Naive thymus-derived CD4-positive, alpha-beta T cell (primary cell): ENCODE measurements at regions of chr3 and their contacts with region 1.

Region 1: DNA sequence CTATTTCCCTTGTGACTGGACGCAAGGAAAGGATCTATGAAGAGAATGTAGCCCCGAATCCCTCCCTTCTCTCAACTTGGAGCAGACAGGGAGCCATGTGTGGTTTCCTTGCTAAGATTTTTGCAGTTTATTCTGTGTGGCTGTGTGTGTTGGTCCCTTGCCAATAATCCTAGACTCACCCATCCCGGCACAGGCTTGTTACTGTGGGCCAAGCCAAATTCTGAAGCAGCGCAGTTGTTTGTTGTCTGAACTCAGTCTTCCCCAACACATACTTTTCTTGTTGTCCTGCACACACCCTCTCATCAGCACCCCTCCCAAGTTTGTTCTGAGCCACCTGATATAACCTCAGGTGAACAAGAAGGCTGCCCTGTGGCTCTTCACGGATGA is 193.3 kb upstream of the CTDSPL start:
- DNase-seq: no peak
- ATAC-seq: no peak
- H3K4me3 ChIP-seq: no peak overlapping the region
- H3K4me3 Mint-ChIP-seq: no peak overlapping the region
- H3K27ac ChIP-seq: no peak overlapping the region
- H3K27ac Mint-ChIP-seq: no peak overlapping the region
- H3K4me1 ChIP-seq: no peaks in the 10 kb centered on the region
- H3K4me1 Mint-ChIP-seq: no peaks in the 10 kb centered on the region
- H3K27me3 ChIP-seq: no peaks in the 10 kb centered on the region
- H3K27me3 Mint-ChIP-seq: peaks cover 2 to 24% (median 11%) of the 10 kb centered on the region in 5 donors

Region 2: DNA sequence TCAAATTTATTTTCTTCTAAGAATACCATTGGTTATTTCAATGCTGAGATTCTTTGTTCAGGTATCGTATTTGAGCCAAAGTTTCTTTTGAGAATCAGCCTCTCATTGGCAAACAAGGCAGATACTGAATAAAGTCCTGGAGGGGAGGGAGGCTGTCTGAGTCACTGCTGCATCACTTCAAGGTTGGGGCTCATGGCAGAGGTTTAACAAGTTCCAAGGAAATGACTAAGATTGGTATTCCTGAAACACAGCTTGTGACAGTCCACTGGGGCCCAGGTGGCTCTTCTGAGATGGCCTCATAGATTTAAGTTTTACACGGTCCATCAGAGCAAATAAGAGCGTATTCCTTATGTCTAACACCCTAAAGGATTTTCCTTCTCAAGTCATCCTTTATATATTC is 1501.9 kb before region 1 on chr3:
- CTCF ChIA-PET with region 1: no interaction called
- POLR2A ChIA-PET with region 1: no interaction called
- intact Hi-C with region 1: loop called in 1 of 2 experiments (anchors 10 kb)
- DNase-seq: no peak
- ATAC-seq: no peak
- H3K4me3 ChIP-seq: no peak overlapping the region
- H3K4me3 Mint-ChIP-seq: no peak overlapping the region
- H3K27ac ChIP-seq: no peak overlapping the region
- H3K27ac Mint-ChIP-seq: no peak overlapping the region
- H3K4me1 ChIP-seq: no peaks in the 10 kb centered on the region
- H3K4me1 Mint-ChIP-seq: no peaks in the 10 kb centered on the region
- H3K27me3 ChIP-seq: no peaks in the 10 kb centered on the region
- H3K27me3 Mint-ChIP-seq: no peaks in the 10 kb centered on the region

Region 3: GRCh38 chr3:37693511-37694283 is 25.3 kb after region 1 on chr3:
- CTCF ChIA-PET with region 1: no interaction called
- POLR2A ChIA-PET with region 1: no interaction called
- intact Hi-C with region 1: loop called in 1 of 2 experiments (anchors 1 kb)
- DNase-seq: no peak
- ATAC-seq: no peak
- H3K4me3 ChIP-seq: no peak overlapping the region
- H3K4me3 Mint-ChIP-seq: no peak overlapping the region
- H3K27ac ChIP-seq: no peak overlapping the region
- H3K27ac Mint-ChIP-seq: no peak overlapping the region
- H3K4me1 ChIP-seq: no peaks in the 10 kb centered on the region
- H3K4me1 Mint-ChIP-seq: no peaks in the 10 kb centered on the region
- H3K27me3 ChIP-seq: no peaks in the 10 kb centered on the region
- H3K27me3 Mint-ChIP-seq: peaks cover 0 to 12% (median 4%) of the 10 kb centered on the region in 5 donors

Region 4: DNA sequence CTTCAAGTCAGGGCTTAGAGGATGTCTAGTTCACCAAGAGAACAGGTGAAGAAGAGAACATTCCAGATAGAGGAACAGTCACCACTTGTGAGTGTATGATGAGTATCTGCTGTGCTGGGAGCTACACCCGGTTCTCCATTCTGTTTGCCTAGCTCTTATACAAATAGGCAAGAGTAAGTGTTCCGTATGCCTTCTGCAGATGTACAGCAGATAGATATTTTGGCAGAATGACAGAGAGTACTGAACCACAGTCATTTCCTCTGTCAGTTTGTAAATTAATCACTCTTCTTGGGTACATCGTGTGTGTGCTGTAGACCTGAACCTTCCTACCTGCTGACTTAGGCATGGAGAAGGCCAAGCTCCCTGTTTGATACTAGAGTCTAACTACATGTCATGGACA is 85.0 kb after region 1 on chr3:
- CTCF ChIA-PET with region 1: no interaction called
- POLR2A ChIA-PET with region 1: no interaction called
- intact Hi-C with region 1: no loop called
- DNase-seq: no peak
- ATAC-seq: no peak
- H3K4me3 ChIP-seq: no peak overlapping the region
- H3K4me3 Mint-ChIP-seq: no peak overlapping the region
- H3K27ac ChIP-seq: no peak overlapping the region
- H3K27ac Mint-ChIP-seq: no peak overlapping the region
- H3K4me1 ChIP-seq: no peaks in the 10 kb centered on the region
- H3K4me1 Mint-ChIP-seq: peaks cover 0 to 7% (median 0%) of the 10 kb centered on the region in 7 donors
- H3K27me3 ChIP-seq: no peaks in the 10 kb centered on the region
- H3K27me3 Mint-ChIP-seq: peaks cover 13 to 45% (median 26%) of the 10 kb centered on the region in 5 donors